Activated CD4-positive, alpha-beta T cell treated with anti-CD3 and anti-CD28 coated beads, Interleukin-2, amount 10 ng/mL, durations not matched to agents 24 days and 14 days (primary cell): ENCODE measurements at regions of chr16 and their contacts with region 1.

Region 1: GRCh38 chr16:85898521-85899442 is at the start of gene IRF8:
- DNase-seq: peak; percentile 93
- H3K4me3 Mint-ChIP-seq: peak within 1 kb of the TSS; percentile 83
- H3K27ac Mint-ChIP-seq: peak within 1 kb of the TSS; percentile 80
- H3K4me1 Mint-ChIP-seq: peaks cover 50% of the 10 kb centered on the region
- H3K27me3 Mint-ChIP-seq: peaks cover 19% of the 10 kb centered on the region
- total RNA-seq, gene IRF8: 235 and 248 TPM in 2 replicates

Region 2: GRCh38 chr16:85821441-85822135 is 77.2 kb before region 1 on chr16:
- intact Hi-C with region 1: loop called (anchors 1 kb)
- DNase-seq: peak; percentile 94
- H3K4me3 Mint-ChIP-seq: no peak overlapping the region
- H3K27ac Mint-ChIP-seq: no peak overlapping the region
- H3K4me1 Mint-ChIP-seq: peaks cover 7% of the 10 kb centered on the region
- H3K27me3 Mint-ChIP-seq: peaks cover 5% of the 10 kb centered on the region

Region 3: DNA sequence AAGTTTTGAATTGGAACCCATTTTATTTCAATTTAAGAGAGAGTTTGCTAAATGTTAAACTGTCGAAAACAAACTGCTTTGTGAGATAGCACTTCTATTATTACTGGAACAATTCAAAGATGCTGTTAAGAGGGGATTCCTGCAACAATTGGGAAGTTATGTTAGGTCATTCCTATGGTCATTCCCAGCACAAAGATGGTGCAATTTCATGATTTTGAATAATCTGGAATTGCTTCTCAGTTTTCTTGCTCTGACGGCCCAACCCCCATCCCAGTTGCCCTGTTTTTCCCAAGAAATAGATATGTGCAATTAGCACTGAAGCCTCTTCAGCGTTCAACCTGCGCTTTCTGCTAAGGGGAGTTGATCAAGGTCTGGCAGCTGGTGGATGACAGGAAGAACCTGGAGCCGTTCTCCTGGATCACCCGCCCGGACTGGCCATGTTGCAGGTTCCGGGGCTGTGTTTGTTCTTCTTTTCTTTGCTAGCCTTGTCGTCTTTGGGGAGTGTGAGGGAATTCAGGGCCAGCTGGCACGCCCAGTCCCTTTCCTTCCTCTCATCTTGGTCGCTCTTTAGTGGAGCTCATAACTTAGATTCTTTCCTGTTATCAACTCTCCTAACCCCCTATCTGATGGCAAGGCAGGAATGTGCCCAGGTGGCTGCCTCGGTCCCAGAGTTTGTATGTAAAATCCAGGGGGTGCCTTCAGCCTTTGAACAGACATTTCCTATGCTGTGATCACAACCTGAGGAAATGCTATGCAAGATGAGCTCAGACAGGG is 28.8 kb before region 1 on chr16:
- intact Hi-C with region 1: loop called (anchors 5 kb)
- DNase-seq: no peak
- H3K4me3 Mint-ChIP-seq: peak overlapping the region; percentile 3
- H3K27ac Mint-ChIP-seq: peak overlapping the region; percentile 50
- H3K4me1 Mint-ChIP-seq: peaks cover 22% of the 10 kb centered on the region
- H3K27me3 Mint-ChIP-seq: peaks cover 13% of the 10 kb centered on the region

Region 4: GRCh38 chr16:85888405-85889331 is 10.1 kb before region 1 on chr16:
- intact Hi-C with region 1: loop called (anchors 1 kb)
- DNase-seq: peak; percentile 70
- H3K4me3 Mint-ChIP-seq: peak overlapping the region; percentile 52
- H3K27ac Mint-ChIP-seq: peak overlapping the region; percentile 82
- H3K4me1 Mint-ChIP-seq: peaks cover 38% of the 10 kb centered on the region
- H3K27me3 Mint-ChIP-seq: peaks cover 32% of the 10 kb centered on the region

Region 5: GRCh38 chr16:85916141-85916890 is 17.5 kb after region 1 on chr16:
- intact Hi-C with region 1: loop called (anchors 2 kb)
- DNase-seq: no peak
- H3K4me3 Mint-ChIP-seq: no peak overlapping the region
- H3K27ac Mint-ChIP-seq: peak overlapping the region; percentile 67
- H3K4me1 Mint-ChIP-seq: peaks cover 10% of the 10 kb centered on the region
- H3K27me3 Mint-ChIP-seq: no peaks in the 10 kb centered on the region

Region 6: DNA sequence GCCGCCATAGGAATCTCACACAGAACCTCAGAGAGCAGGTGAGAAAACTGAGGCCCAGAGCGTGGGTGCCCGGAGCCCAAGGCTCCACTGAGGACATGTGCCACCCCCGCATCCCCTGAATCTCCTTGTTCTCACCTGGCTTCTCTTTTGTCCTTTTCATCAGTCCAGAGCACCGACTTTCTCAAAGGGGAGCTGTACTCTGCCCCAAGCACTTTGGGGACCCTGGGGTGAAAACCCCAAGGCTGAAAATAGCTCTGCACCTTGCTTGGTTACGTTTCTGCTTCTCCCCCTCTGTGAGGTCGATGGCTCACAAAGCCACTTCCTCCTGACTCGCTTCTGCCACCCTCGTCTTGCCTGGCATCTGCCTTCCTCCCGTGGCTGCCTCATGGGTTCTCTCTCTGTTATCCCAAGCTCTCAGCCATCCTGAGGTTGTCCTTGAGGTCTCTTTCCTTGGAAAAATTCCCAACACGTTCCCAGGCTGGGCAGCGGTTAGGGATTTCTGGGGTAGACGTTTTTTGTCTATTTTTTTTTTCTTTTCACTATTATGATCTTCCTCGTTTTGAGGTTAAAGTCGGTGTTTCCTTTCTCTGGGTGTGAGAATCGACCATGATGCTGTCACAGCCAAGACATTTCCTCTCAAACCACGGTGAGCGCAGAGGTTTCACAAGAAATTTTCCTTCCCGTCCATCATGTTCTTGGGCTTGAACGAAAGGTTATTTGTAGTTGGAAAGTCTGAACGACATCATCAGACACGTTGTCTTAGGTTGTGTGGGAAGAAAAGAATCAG is 37.4 kb after region 1 on chr16:
- intact Hi-C with region 1: loop called (anchors 2 kb)
- DNase-seq: peak; percentile 90
- H3K4me3 Mint-ChIP-seq: peak overlapping the region; percentile 60
- H3K27ac Mint-ChIP-seq: peak overlapping the region; percentile 98
- H3K4me1 Mint-ChIP-seq: peaks cover 60% of the 10 kb centered on the region
- H3K27me3 Mint-ChIP-seq: peaks cover 3% of the 10 kb centered on the region

Region 7: GRCh38 chr16:86016201-86016871 is 117.6 kb after region 1 on chr16:
- intact Hi-C with region 1: loop called (anchors 2 kb)
- DNase-seq: peak; percentile 79
- H3K4me3 Mint-ChIP-seq: no peak overlapping the region
- H3K27ac Mint-ChIP-seq: no peak overlapping the region
- H3K4me1 Mint-ChIP-seq: peaks cover 7% of the 10 kb centered on the region
- H3K27me3 Mint-ChIP-seq: peaks cover 23% of the 10 kb centered on the region